ENCODE measurements at regions of chr15 and their contacts with region 1.

Region 1: GRCh38 chr15:90221246-90221900 is 12.4 kb downstream of the CIB1 start:
- DNase-seq: peak; percentile 72 to 83
- H3K4me3 ChIP-seq: no peak overlapping the region
- H3K27ac ChIP-seq: no peak overlapping the region
- H3K4me1 ChIP-seq: peaks cover 0 to 2% (median under 1%) of the 10 kb centered on the region in 4 experiments; a peak in 2 of 7 replicates
- H3K27me3 ChIP-seq: no peaks in the 10 kb centered on the region
- CTCF ChIP-seq: peak; percentile 95
- EP300 ChIP-seq: no peak
- POLR2A ChIP-seq: no peak
- RAD21 ChIP-seq: peak; percentile 96 to 97

Region 2: GRCh38 chr15:90143166-90143655 is 78.2 kb before region 1 on chr15:
- CTCF ChIA-PET with region 1: interaction called, 115 read pairs
- POLR2A ChIA-PET with region 1: no interaction called
- DNase-seq: peak; percentile 58 to 91
- H3K4me3 ChIP-seq: no peak overlapping the region
- H3K27ac ChIP-seq: no peak overlapping the region
- H3K4me1 ChIP-seq: no peaks in the 10 kb centered on the region; a peak in 3 of 7 replicates
- H3K27me3 ChIP-seq: no peaks in the 10 kb centered on the region
- CTCF ChIP-seq: peak; percentile 89 to 97 (median 93)
- EP300 ChIP-seq: no peak
- POLR2A ChIP-seq: no peak
- RAD21 ChIP-seq: peak; percentile 97 to 99

Region 3: DNA sequence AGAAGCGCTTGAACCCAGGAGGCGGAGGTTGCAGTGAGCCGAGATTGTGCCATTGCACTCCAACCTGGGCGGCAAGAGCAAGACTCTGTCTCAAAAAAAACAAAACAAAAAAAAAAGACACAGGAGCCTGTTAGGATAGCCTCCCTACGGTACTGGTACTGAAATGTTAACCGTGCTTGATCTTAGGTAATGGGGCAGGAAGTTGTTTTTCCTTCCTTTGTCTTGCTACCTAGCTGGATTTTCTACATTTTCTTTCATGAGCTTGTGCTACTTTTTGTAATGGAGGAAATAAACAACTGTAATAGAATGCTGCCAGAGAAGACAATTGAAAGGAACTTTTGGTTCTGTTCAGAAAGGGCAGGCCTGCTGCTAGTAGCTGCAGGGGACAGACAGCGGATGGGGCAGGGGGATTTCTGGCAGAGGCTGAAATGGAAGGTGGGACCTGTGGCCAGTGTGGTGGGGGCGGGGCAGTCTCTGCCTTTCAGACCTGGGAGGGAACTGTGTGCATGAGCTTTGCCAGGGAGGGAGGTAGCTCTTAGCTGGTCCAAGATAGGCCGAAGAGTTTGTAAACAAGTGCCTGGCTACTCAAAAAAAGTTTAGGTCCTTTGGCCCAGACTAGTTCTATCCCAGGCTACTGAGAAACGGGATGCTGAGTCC is 69.3 kb before region 1 on chr15:
- CTCF ChIA-PET with region 1: interaction called, 115 read pairs
- POLR2A ChIA-PET with region 1: no interaction called
- DNase-seq: peak in 1 of 2 experiments; percentile 82
- H3K4me3 ChIP-seq: no peak overlapping the region
- H3K27ac ChIP-seq: peak overlapping the region; percentile 71
- H3K4me1 ChIP-seq: peaks cover 5 to 10% (median 6%) of the 10 kb centered on the region in 4 experiments
- H3K27me3 ChIP-seq: no peaks in the 10 kb centered on the region; a peak in 1 of 7 replicates
- CTCF ChIP-seq: no peak
- EP300 ChIP-seq: 0 out of 3 replicates have a peak, but pooled peaks of 1 of the 2 experiments have one; percentile 23
- POLR2A ChIP-seq: no peak
- RAD21 ChIP-seq: no peak

Region 4: DNA sequence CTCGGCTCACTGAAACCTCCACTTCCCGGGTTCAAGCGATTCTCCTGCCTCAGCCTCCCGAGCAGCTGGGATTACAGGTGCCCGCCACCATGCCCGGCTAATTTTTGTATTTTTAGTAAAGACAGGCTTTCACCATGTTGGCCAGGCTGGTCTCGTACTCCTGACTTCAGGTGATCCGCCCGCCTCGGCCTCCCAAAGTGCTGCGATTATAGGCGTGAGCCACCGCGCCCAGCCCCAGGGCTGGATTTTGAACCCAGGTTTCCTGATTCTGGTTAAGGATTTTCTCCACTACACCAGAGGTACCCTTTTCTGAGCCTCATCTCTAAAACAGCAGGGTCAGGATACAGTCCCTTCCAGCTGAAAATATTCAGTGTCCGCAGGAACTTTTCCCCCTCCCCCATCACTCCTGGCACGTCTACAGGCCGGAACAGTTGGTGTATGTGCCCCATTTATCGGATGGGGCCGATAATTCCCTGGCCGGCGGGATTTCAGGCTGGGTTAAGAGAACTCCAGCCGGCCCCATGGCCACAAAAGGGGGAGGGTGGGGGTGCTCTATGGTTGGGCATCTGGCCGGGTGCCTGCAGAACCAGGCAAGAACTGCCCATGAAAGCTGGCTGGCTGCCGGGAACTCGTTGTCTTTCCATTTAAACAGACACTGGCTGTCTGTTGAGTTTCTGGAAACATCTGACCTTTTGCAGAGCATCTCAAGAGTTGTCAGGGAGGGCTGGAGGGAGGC is 47.1 kb before region 1 on chr15:
- CTCF ChIA-PET with region 1: interaction called, 12 read pairs
- POLR2A ChIA-PET with region 1: interaction called, 3 read pairs
- DNase-seq: no peak
- H3K4me3 ChIP-seq: no peak overlapping the region
- H3K27ac ChIP-seq: no peak overlapping the region
- H3K4me1 ChIP-seq: peaks cover 5 to 14% (median 9%) of the 10 kb centered on the region in 4 experiments; a peak in 6 of 7 replicates
- H3K27me3 ChIP-seq: no peaks in the 10 kb centered on the region
- CTCF ChIP-seq: no peak
- EP300 ChIP-seq: no peak
- POLR2A ChIP-seq: no peak
- RAD21 ChIP-seq: no peak

Region 5: DNA sequence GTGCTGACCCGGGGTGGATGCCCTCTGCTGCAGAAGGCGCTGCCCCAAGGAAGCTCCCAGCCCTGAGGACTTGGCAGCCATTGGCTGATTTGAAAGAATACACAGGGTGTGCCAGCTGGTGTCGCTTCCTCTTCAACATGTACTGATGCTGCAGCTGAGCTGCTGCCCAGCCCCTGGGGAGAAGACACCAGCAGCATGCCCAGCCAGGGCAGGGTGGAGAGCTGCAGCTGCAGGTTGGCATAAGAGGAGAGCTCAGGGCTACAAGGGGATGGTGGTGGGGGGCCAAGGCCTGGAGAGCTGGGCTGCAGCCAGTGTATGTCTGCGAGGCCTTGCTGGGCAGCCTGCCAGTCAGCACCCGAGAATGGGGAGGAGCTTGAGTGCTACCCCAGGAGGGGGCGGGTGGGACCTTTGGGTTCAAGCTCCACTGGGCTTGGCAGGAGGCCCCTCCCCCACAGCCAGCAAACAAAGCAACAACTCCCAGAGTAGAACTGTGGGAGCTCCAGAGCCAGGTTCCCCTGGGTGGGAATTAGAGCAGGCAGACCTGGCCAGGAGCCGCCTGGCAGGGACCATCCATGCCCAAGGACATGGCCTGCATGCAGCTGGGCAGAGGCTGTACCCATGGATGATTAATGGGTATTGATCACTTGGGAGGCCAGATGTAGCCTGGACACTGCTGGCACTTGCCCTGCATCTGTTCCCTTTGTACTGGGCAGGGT is 29.4 kb before region 1 on chr15:
- CTCF ChIA-PET with region 1: interaction called, 14 read pairs
- POLR2A ChIA-PET with region 1: no interaction called
- DNase-seq: no peak
- H3K4me3 ChIP-seq: no peak overlapping the region
- H3K27ac ChIP-seq: no peak overlapping the region
- H3K4me1 ChIP-seq: peaks cover 0 to 8% (median 5%) of the 10 kb centered on the region in 4 experiments; a peak in 6 of 7 replicates
- H3K27me3 ChIP-seq: no peaks in the 10 kb centered on the region
- CTCF ChIP-seq: no peak
- EP300 ChIP-seq: no peak
- POLR2A ChIP-seq: no peak
- RAD21 ChIP-seq: no peak

Region 6: DNA sequence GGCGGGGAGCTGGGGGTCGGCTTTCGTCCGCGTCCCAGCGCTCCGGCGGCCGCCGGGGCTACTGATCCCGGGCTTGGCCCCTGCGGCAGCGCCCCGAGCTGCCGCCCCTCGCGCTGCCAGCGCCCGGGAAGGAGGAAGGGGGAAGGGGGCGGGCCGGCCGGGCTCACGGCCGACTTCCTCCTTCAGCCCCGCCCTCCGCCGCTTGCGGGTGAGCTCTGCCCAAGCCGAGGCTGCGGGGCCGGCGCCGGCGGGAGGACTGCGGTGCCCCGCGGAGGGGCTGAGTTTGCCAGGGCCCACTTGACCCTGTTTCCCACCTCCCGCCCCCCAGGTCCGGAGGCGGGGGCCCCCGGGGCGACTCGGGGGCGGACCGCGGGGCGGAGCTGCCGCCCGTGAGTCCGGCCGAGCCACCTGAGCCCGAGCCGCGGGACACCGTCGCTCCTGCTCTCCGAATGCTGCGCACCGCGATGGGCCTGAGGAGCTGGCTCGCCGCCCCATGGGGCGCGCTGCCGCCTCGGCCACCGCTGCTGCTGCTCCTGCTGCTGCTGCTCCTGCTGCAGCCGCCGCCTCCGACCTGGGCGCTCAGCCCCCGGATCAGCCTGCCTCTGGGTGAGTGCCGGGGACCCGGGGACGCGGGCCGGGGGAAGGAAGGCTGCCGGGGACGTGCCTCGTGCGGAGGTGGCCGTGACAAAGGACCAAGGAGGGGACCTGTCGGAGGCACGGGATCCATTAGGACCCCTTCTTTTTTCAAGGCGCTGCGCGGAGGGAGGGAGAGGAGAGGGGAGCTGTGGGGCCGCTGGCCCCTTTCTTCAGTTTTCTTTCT is 20.0 kb before region 1 on chr15 and contains the start of gene SEMA4B:
- CTCF ChIA-PET with region 1: interaction called, 182 read pairs
- POLR2A ChIA-PET with region 1: no interaction called
- DNase-seq: peak in 1 of 2 experiments; percentile 90
- H3K4me3 ChIP-seq: peak within 1 kb of the TSS; percentile 55 to 95 (median 81)
- H3K27ac ChIP-seq: peak within 1 kb of the TSS; percentile 64; the same call in 1 of the 2 replicates
- H3K4me1 ChIP-seq: peaks cover 0 to 21% (median 7%) of the 10 kb centered on the region in 4 experiments; a peak in 5 of 7 replicates
- H3K27me3 ChIP-seq: no peaks in the 10 kb centered on the region
- CTCF ChIP-seq: no peak
- EP300 ChIP-seq: no peak
- POLR2A ChIP-seq: peak in 1 of 2 experiments; percentile 50; a peak in 1 of 3 replicates
- RAD21 ChIP-seq: peak in 1 of 2 experiments; percentile 0; a peak in 1 of 4 replicates
- total RNA-seq, gene SEMA4B: 42.7 and 43.6 TPM in 2 replicates

Region 7: DNA sequence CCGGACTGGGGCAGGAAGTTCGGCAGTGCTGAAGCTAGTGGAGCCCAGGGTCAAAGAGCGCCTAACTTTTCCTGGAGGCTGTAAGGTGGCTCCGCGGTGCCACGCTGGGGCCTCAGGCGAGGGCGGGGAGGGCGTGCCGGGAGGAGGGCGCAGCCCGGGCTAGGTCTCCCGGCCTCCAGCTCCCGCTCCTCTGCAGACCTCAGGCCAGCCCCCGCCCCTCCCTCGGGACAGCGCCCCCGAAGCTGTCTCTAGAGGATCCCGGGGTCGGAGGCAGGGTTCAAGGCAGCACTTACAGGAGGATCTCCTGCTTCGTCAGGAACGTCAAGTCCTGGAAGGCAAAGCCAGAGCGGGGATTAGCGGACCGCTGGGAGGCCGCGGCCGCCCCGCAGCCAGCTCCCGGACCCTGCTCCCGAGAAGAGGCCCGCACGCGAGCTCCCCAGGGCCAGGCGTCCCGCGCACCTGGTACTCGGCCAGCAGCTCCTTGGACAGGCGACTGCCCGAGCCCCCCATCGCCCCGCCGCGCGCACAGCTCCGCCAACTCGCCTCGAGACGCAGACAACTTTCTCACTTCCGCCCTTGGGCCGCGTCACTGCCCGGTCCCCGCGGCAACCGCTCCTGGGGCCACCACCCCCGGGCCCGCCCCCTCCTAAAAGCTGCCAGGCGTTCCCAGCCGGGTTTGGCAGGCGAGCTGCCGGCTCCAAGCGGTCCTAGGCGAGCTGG is 12.2 kb after region 1 on chr15 and contains the start of gene CIB1:
- CTCF ChIA-PET with region 1: interaction called, 46 read pairs
- POLR2A ChIA-PET with region 1: interaction called, 10 read pairs
- DNase-seq: peak; percentile 76 to 94
- H3K4me3 ChIP-seq: peak within 1 kb of the TSS; percentile 57 to 76 (median 73)
- H3K27ac ChIP-seq: no peak within 1 kb of the TSS
- H3K4me1 ChIP-seq: peaks cover 0 to 6% (median under 1%) of the 10 kb centered on the region in 4 experiments; a peak in 4 of 7 replicates
- H3K27me3 ChIP-seq: no peaks in the 10 kb centered on the region
- CTCF ChIP-seq: peak in 2 of 3 experiments; percentile 71 to 76; a peak in 3 of 4 replicates
- EP300 ChIP-seq: no peak
- POLR2A ChIP-seq: peak in 1 of 2 experiments; percentile 67; a peak in 2 of 3 replicates
- RAD21 ChIP-seq: no peak
- total RNA-seq, gene CIB1: 26.0 and 29.1 TPM in 2 replicates

Measured in H1 (cell line).